ENCODE measurements at regions of chr2 and their contacts with region 1.

Region 1: DNA sequence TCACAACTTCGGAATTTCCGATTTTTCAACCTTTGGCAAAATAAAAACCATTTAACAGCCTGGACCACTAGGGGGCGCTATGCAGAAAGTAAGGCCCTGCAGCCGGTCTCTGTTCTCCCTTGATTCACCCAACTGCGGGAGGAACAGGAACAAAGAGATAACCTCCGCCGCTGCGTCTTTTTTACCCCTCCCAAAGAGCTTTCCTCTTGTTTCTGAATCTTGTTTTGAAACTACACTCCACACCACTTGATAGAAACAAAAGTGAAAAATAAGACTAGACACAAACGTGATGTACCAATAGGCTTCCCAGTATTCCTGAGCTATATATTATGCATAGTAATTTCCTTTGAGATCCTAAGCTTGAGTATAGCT is 231.2 kb downstream of the MYO3B start:
- DNase-seq: no peak
- ATAC-seq: peak; percentile 81
- H3K4me3 ChIP-seq: no peak overlapping the region
- H3K27ac ChIP-seq: no peak overlapping the region
- H3K4me1 ChIP-seq: peaks cover 11% of the 10 kb centered on the region
- H3K27me3 ChIP-seq: no peaks in the 10 kb centered on the region
- CTCF ChIP-seq: peak; percentile 73 to 85 (median 79)
- EP300 ChIP-seq: no peak
- POLR2A ChIP-seq: no peak
- RAD21 ChIP-seq: peak; percentile 68

Region 2: DNA sequence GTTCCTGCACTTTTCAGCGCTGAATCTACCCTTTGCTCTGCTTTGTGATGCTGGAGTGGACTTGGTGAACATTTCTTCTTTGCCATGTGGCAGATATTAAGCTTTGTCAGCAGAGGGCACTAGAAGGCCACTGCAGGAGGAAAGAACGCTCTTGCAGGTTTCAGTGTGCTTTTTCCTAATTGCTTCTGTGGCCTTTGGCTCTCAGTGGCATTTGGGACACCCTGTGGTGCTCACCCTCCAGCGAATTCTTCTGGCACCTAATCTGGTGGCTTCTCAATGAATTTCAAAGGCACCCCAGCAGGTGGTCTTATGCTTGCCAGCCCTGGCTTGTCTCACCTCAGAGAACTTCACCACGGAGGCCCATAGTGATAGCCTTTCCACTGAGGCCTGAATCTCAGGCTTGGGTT is 84.5 kb before region 1 on chr2:
- CTCF ChIA-PET with region 1: interaction called, 12 read pairs
- POLR2A ChIA-PET with region 1: no interaction called
- RAD21 ChIA-PET with region 1: interaction called, 6 read pairs
- SMC1A ChIA-PET with region 1: interaction called, 7 read pairs
- in situ Hi-C with region 1: no loop called
- intact Hi-C with region 1: no loop called
- DNase-seq: no peak
- ATAC-seq: peak; percentile 89
- H3K4me3 ChIP-seq: no peak overlapping the region
- H3K27ac ChIP-seq: no peak overlapping the region
- H3K4me1 ChIP-seq: no peaks in the 10 kb centered on the region
- H3K27me3 ChIP-seq: no peaks in the 10 kb centered on the region
- CTCF ChIP-seq: peak; percentile 80 to 88 (median 84)
- EP300 ChIP-seq: no peak
- POLR2A ChIP-seq: no peak
- RAD21 ChIP-seq: peak; percentile 97

Region 3: DNA sequence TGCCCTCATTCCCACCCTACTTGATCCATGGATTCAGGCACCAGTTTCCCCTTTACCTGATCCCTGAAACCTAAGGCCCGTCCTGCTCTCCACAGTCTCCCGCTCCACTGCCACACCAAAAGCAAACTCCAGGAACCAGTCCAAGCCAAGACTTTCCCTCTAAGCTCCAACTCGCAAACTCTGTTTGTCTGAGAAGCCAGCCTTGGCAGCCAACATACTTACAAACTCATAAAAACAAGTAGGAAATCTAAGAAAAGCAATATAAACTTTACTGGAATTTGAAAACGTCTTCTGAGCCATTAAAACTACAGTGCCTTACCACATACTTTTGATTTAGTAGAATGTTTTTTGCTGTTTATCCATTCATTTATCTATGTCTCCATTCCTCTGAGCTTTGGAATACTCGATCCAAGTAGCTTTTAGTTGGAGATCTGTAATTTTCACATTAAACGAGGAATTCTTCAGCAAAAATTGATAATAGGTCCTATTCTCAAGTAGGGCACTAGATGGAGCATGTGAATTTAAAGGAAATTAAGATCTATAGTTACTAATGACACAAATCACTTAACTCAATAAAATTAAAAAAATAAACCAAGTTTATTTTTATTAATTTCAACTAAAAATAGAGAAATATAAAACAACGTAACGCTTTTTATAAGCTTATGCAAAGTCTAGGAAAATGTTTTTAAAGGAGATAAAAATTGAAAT is 31.5 kb before region 1 on chr2:
- CTCF ChIA-PET with region 1: interaction called, 15 read pairs
- POLR2A ChIA-PET with region 1: no interaction called
- RAD21 ChIA-PET with region 1: interaction called, 3 read pairs
- SMC1A ChIA-PET with region 1: interaction called, 4 read pairs
- in situ Hi-C with region 1: no loop called
- intact Hi-C with region 1: no loop called
- DNase-seq: no peak
- ATAC-seq: no peak
- H3K4me3 ChIP-seq: no peak overlapping the region
- H3K27ac ChIP-seq: no peak overlapping the region
- H3K4me1 ChIP-seq: no peaks in the 10 kb centered on the region
- H3K27me3 ChIP-seq: no peaks in the 10 kb centered on the region
- CTCF ChIP-seq: no peak
- EP300 ChIP-seq: no peak
- POLR2A ChIP-seq: no peak
- RAD21 ChIP-seq: no peak

Region 4: DNA sequence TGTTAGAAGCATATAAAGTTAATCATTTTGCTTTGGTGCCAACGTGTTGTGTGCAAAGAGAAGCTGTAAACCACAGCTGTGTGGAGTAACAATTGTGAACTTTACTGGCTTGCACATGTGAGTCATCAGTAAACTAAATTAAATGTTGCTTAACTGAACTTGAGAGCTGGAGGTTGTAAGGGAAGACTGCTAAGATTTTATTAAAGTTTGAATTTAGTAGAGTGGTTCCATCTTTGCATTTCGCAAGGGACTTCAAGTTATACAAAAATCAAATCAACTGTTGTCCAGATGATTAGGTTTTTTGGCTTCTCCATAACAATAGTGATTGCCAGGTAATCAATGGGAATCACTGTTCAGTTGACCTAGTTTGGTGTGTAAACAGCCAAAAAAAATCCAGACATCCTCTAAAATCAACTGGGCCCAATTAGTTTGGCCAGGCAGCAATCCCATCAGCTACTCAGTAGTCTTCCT is 16.2 kb after region 1 on chr2:
- CTCF ChIA-PET with region 1: interaction called, 43 read pairs
- POLR2A ChIA-PET with region 1: interaction called, 3 read pairs
- RAD21 ChIA-PET with region 1: interaction called, 8 read pairs
- SMC1A ChIA-PET with region 1: interaction called, 6 read pairs
- in situ Hi-C with region 1: no loop called
- intact Hi-C with region 1: no loop called
- DNase-seq: no peak
- ATAC-seq: no peak
- H3K4me3 ChIP-seq: no peak overlapping the region
- H3K27ac ChIP-seq: no peak overlapping the region
- H3K4me1 ChIP-seq: peaks cover 3% of the 10 kb centered on the region; the same call in 1 of the 2 replicates
- H3K27me3 ChIP-seq: no peaks in the 10 kb centered on the region
- CTCF ChIP-seq: no peak
- EP300 ChIP-seq: no peak
- POLR2A ChIP-seq: no peak
- RAD21 ChIP-seq: no peak

Region 5: DNA sequence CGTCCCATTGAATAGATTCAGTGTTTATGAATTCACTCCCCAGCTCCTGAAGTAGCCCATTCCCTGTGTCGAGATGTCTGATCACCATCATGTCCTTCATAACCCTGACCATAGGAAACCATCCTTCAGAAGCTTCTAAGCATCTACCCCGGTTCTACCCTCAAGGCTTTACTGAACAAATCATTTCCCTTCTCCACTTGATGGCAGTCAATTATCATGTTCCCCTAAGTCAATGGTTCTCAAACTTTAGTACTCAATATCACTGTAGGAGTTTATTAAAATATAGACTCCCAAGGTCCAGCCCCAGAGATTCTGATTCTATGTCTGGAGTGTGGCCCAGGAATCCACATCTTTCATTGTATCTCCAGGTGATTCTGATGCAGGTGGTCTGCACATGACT is 77.6 kb after region 1 on chr2:
- CTCF ChIA-PET with region 1: interaction called, 7 read pairs
- POLR2A ChIA-PET with region 1: no interaction called
- RAD21 ChIA-PET with region 1: interaction called, 7 read pairs
- SMC1A ChIA-PET with region 1: interaction called, 15 read pairs
- in situ Hi-C with region 1: no loop called
- intact Hi-C with region 1: no loop called
- DNase-seq: no peak
- ATAC-seq: peak; percentile 37; the same call in 1 of the 3 replicates
- H3K4me3 ChIP-seq: no peak overlapping the region
- H3K27ac ChIP-seq: no peak overlapping the region
- H3K4me1 ChIP-seq: no peaks in the 10 kb centered on the region
- H3K27me3 ChIP-seq: no peaks in the 10 kb centered on the region
- CTCF ChIP-seq: peak in 1 of 3 experiments; percentile 39; a peak in 2 of 6 replicates
- EP300 ChIP-seq: no peak
- POLR2A ChIP-seq: no peak
- RAD21 ChIP-seq: peak; percentile 50

Region 6: DNA sequence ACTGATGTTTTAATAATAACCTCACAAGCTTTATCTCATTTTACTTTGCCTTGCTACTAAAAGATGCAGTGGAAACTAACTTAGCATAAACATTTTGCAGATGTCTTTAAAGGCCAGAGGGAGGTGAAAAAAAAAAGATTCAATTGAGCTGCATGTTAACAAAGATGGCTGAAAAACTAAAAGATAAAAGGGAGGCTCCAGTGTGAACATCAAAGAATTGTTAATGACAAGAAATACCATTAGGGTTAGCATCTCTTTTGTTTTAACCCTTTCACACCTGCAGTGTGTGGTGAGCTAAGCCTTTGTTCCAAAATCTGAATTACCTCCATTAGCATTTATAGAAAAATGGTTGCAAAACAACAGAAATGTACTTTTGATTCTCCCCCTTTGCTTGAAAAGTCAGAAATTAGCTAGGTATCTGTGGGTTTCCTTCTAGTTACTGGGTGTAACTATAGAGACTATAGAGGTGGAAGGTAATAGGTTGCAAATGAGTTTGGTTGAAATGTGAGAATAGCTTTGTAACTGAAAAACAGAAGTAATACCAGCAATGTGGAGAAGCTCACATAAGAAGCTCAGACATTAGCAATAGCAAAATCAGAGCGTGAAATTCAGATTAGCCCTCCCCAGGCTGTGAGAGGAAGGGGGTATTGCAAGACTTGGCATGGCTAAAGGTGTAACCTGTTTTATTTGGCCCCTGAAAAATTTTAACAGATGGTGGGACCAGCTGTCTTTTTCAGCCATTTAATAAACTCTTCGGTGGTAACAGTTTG is 271.2 kb after region 1 on chr2:
- CTCF ChIA-PET with region 1: interaction called, 6 read pairs
- POLR2A ChIA-PET with region 1: interaction called, 7 read pairs
- RAD21 ChIA-PET with region 1: interaction called, 28 read pairs
- SMC1A ChIA-PET with region 1: interaction called, 11 read pairs
- in situ Hi-C with region 1: no loop called
- intact Hi-C with region 1: no loop called
- DNase-seq: peak; percentile 40
- ATAC-seq: peak; percentile 99
- H3K4me3 ChIP-seq: peak overlapping the region; percentile 7; the same call in 1 of the 2 replicates
- H3K27ac ChIP-seq: no peak overlapping the region
- H3K4me1 ChIP-seq: peaks cover 13% of the 10 kb centered on the region; the same call in 1 of the 2 replicates
- H3K27me3 ChIP-seq: no peaks in the 10 kb centered on the region
- CTCF ChIP-seq: no peak
- EP300 ChIP-seq: peak in 1 of 2 experiments; percentile 50; a peak in 1 of 4 replicates
- POLR2A ChIP-seq: no peak
- RAD21 ChIP-seq: no peak

Region 7: DNA sequence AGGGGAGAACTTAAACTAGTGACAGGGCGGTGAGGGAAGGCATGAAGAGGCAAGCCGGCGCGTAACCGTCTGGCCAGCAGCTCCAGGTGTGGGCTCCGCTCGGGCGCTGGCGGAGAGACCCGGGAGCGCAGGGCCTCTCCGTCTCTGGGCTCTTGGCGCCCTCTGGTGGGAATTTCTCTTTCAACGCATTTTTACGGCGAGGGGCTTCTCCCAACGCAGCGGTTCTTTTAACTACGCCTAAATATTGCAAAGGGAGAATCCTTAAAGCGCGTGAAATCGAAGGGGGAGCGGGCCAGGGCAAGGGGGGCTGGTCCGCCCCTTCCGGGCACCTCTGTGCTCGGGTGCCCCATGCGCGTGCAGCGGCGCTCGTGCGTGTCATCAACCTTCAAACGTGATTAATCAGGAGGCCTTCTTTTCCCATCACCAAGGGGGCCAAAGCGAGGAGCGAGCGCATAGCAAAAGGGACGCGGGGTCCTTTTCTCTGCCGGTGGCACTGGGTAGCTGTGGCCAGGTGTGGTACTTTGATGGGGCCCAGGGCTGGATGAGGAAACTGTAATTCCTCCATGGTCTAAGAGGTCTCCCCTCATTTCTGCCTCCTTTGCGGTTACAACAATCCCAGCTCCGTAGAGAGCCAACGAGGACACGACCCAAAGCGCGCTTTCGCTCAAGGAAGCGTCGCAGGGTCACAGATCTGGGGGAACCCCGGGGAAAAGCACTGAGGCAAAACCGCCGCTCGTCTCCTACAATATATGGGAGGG is 406.8 kb after region 1 on chr2:
- CTCF ChIA-PET with region 1: interaction called, 63 read pairs
- POLR2A ChIA-PET with region 1: no interaction called
- RAD21 ChIA-PET with region 1: interaction called, 25 read pairs
- SMC1A ChIA-PET with region 1: interaction called, 40 read pairs
- in situ Hi-C with region 1: no loop called
- intact Hi-C with region 1: loop called (anchors 1 kb)
- DNase-seq: no peak
- ATAC-seq: peak; percentile 75
- H3K4me3 ChIP-seq: peak overlapping the region; percentile 54
- H3K27ac ChIP-seq: no peak overlapping the region
- H3K4me1 ChIP-seq: peaks cover 11% of the 10 kb centered on the region
- H3K27me3 ChIP-seq: peaks cover 5 to 34% of the 10 kb centered on the region in 2 experiments
- CTCF ChIP-seq: peak; percentile 65 to 79 (median 78)
- EP300 ChIP-seq: no peak
- POLR2A ChIP-seq: no peak
- RAD21 ChIP-seq: peak; percentile 80

Measured in GM12878 (cell line).